Activated CD8-positive, alpha-beta T cell treated with anti-CD3 and anti-CD28 coated beads for 36 hours (primary cell): ENCODE measurements at regions of chr3 and their contacts with region 1.

Region 1: GRCh38 chr3:183377307-183377959 is 51.0 kb downstream of the MCF2L2 start:
- DNase-seq: no peak
- ATAC-seq: peak; percentile 73
- H3K4me3 Mint-ChIP-seq: no peak overlapping the region
- H3K27ac Mint-ChIP-seq: peak overlapping the region; percentile 10
- H3K4me1 Mint-ChIP-seq: peaks cover 37% of the 10 kb centered on the region
- H3K27me3 Mint-ChIP-seq: no peaks in the 10 kb centered on the region
- CTCF ChIP-seq: no peak

Region 2: GRCh38 chr3:183178629-183179549 is 198.5 kb before region 1 on chr3:
- CTCF ChIA-PET with region 1: interaction called, 277 read pairs
- POLR2A ChIA-PET with region 1: interaction called, 5 read pairs
- intact Hi-C with region 1: loop called (anchors 1 kb)
- DNase-seq: peak; percentile 79
- ATAC-seq: peak; percentile 84
- H3K4me3 Mint-ChIP-seq: peak overlapping the region; percentile 73
- H3K27ac Mint-ChIP-seq: no peak overlapping the region
- H3K4me1 Mint-ChIP-seq: peaks cover 11% of the 10 kb centered on the region
- H3K27me3 Mint-ChIP-seq: peaks cover 24% of the 10 kb centered on the region
- CTCF ChIP-seq: peak; percentile 29

Region 3: DNA sequence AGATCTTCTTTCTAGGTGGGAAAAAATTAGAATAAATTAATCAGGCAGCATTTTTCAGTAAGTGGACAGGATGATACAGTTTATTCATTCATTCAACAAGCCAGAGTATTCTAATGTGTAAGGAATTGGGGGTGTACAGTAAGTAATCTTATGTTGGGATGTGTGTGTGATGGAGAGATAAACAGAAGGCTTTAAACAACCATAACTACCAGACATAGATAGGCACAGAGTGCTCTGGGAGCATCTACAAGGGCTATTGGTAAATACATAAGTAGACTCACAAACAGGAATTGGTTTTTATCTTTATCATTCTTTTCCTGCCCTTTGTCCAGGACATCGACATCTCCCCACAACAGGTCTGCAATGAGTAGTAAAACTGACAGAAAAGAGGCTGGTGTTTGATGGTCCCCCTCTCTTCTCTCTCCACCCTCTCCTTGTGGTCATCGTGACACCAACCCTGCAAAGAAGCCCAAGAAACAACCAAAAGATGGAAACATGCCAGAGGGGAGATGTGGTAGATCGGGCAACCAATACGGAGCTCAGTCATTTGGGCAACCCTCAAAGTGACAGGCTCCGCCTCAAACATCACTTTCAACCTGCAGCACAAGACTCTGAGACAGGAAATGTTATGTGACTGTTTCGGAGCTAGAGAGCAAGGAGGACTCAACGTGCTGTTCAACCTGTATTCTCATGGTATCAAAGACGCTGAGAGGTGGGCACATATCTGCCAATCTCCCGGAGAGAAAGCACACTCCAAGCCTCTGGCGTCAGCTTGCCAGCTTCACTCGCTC is 153.1 kb before region 1 on chr3:
- CTCF ChIA-PET with region 1: interaction called, 10 read pairs
- POLR2A ChIA-PET with region 1: no interaction called
- intact Hi-C with region 1: no loop called
- DNase-seq: peak; percentile 74
- ATAC-seq: peak; percentile 93
- H3K4me3 Mint-ChIP-seq: peak overlapping the region; percentile 39
- H3K27ac Mint-ChIP-seq: peak overlapping the region; percentile 70
- H3K4me1 Mint-ChIP-seq: peaks cover 37% of the 10 kb centered on the region
- H3K27me3 Mint-ChIP-seq: no peaks in the 10 kb centered on the region
- CTCF ChIP-seq: no peak

Region 4: DNA sequence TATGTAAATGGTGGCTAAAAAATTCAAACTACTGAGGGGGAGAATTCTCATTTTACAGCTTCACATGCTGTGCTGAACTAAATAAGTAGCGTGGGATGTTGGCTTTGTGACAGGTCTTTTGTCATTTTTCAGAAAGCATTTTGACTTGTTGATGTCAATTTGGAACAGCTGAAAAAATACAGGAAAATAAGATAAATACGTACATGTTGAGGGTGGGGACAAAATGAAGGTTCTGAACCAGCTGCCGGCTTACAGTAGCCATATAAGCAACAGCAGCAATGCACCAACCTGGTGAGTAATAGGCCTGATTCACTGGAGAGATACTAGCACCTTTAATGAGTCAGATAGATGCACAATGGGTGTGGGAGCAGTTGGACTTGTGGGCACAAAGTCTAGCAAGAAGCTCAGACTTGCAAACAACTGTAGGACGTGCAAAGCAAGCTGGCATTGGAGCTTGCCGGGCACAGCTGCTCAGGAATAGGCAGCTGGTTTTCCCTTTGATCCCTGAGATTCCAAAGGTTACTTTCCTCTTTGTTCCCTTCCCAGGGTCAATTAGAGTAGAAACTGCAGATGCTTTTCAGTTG is 111.5 kb before region 1 on chr3:
- CTCF ChIA-PET with region 1: interaction called, 21 read pairs
- POLR2A ChIA-PET with region 1: interaction called, 4 read pairs
- intact Hi-C with region 1: loop called (anchors 5 kb)
- DNase-seq: peak; percentile 80
- ATAC-seq: peak; percentile 93
- H3K4me3 Mint-ChIP-seq: no peak overlapping the region
- H3K27ac Mint-ChIP-seq: no peak overlapping the region
- H3K4me1 Mint-ChIP-seq: peaks cover 28% of the 10 kb centered on the region
- H3K27me3 Mint-ChIP-seq: no peaks in the 10 kb centered on the region
- CTCF ChIP-seq: no peak

Region 5: GRCh38 chr3:183357564-183358079 is 19.8 kb before region 1 on chr3:
- CTCF ChIA-PET with region 1: no interaction called
- POLR2A ChIA-PET with region 1: no interaction called
- intact Hi-C with region 1: no loop called
- DNase-seq: no peak
- ATAC-seq: no peak
- H3K4me3 Mint-ChIP-seq: no peak overlapping the region
- H3K27ac Mint-ChIP-seq: no peak overlapping the region
- H3K4me1 Mint-ChIP-seq: peaks cover 7% of the 10 kb centered on the region
- H3K27me3 Mint-ChIP-seq: no peaks in the 10 kb centered on the region
- CTCF ChIP-seq: no peak